ENCODE measurements at regions of chr19 and their contacts with region 1.

Region 1: GRCh38 chr19:57350877-57351805 is at the start of gene ZNF304:
- DNase-seq: peak; percentile 96
- total RNA-seq, gene ZNF304: 10.0 TPM

Region 2: DNA sequence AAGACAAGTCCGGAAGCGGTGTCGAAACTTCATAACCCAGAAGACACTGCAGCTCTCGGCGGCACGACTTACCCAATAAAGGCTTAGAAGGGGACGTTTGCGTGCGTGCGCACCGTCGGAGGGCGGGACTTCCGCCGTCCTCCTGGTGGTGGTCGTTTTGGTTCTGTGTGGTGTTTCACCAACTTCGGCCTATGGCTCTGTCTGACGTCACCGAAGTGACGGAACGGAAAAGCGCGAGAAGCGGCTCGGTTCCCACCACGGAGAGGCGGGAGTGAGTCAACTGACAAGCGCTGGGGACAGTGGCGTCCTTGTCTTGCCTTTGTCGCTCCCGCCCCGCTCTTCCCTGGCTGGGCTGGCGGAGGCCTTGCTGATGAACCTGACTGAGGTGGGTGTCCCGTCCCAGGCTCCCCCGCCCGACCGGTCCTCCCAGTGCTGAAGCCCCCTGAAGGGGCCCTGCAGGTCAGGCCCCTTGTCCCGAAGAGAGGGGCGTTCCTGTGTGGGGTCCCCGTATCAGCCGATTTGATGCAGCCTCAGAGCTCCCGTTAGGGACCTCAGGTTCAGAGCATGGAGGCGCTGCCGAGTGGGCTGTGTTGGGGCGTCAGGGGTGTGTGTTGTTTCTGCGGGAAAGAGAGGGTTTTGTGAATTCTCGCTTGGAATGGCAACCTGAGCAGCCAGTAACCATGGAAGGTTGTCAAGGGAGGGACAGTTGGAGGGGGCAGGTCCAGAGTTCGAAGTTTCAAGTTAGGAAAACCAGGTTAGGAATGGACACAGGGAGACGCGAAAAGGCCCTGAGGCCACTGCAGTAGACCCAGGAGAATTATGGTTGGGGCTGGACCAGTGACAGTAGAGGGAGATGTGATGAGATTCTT is 38.8 kb after region 1 on chr19 and contains the start of gene ZNF548:
- intact Hi-C with region 1: loop called (anchors 5 kb)
- DNase-seq: peak; percentile 95
- total RNA-seq, gene ZNF548: 16.1 TPM